Activated CD8-positive, alpha-beta memory T cell treated with anti-CD3 and anti-CD28 coated beads, Interleukin-2, amount 10 ng/mL, durations not matched to agents 7 days and 5 days (primary cell): ENCODE measurements at regions of chr12 and their contacts with region 1.

Region 1: GRCh38 chr12:107884769-107885694 is 110.5 kb downstream of the ASCL4 start:
- DNase-seq: peak; percentile 62
- ATAC-seq: peak; percentile 80
- H3K4me3 Mint-ChIP-seq: no peak overlapping the region
- H3K27ac Mint-ChIP-seq: no peak overlapping the region
- H3K4me1 Mint-ChIP-seq: peaks cover 5% of the 10 kb centered on the region
- H3K27me3 Mint-ChIP-seq: peaks cover 34% of the 10 kb centered on the region

Region 2: DNA sequence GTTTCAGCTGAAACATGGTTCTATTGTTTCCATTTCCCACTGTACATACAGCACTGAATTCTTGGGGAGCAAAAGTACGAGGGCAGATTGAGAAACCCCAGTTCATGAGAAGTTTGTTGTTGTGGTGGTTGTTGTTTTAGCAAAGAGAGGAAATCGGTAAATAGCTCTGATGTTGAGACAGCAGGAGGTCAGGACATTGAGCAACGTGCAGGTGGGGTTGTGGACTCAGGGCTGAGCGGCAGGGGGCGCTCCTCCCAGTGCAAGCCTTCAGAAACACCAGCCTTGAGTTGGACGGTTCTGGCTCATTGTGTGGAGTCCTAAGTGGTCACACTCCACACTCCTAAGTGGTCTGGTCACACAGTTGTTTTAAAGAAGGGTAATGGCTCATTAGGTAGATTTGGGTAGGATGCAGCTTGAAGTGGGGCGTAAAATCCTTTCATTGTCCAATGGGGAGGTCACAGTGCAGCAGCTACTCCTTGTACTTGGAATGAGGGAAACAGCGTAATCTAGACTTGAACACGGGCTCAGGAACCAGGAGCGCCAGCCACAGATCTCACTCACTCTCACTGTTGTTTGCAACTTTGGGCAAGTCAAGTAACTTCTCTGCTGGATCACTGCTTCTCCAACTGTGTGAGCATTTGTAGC is 213.9 kb before region 1 on chr12:
- CTCF ChIA-PET with region 1: interaction called, 32 read pairs
- DNase-seq: peak; percentile 62
- ATAC-seq: peak; percentile 73
- H3K4me3 Mint-ChIP-seq: no peak overlapping the region
- H3K27ac Mint-ChIP-seq: no peak overlapping the region
- H3K4me1 Mint-ChIP-seq: peaks cover 5% of the 10 kb centered on the region
- H3K27me3 Mint-ChIP-seq: peaks cover 34% of the 10 kb centered on the region

Region 3: DNA sequence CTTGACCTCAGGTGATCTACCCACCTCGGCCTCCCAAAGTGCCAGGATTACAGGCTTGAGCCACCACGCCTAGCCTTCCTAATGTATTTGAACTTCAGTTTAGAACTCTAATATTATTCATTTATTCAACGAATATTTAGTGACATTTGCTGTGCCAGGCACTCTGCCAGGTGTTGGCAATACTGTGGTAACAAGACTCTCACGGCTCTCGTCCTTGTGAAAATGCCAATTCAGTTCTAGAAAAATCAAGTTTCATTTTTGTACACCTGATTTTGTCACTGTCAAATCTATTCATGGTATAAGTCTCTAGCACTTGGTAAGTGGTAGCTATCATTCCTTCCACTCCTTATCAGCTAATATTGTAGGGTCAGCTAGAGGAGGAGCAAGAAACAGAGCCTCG is 205.7 kb before region 1 on chr12:
- CTCF ChIA-PET with region 1: interaction called, 32 read pairs
- DNase-seq: no peak
- ATAC-seq: no peak
- H3K4me3 Mint-ChIP-seq: no peak overlapping the region
- H3K27ac Mint-ChIP-seq: no peak overlapping the region
- H3K4me1 Mint-ChIP-seq: peaks cover 1% of the 10 kb centered on the region
- H3K27me3 Mint-ChIP-seq: peaks cover 20% of the 10 kb centered on the region

Region 4: DNA sequence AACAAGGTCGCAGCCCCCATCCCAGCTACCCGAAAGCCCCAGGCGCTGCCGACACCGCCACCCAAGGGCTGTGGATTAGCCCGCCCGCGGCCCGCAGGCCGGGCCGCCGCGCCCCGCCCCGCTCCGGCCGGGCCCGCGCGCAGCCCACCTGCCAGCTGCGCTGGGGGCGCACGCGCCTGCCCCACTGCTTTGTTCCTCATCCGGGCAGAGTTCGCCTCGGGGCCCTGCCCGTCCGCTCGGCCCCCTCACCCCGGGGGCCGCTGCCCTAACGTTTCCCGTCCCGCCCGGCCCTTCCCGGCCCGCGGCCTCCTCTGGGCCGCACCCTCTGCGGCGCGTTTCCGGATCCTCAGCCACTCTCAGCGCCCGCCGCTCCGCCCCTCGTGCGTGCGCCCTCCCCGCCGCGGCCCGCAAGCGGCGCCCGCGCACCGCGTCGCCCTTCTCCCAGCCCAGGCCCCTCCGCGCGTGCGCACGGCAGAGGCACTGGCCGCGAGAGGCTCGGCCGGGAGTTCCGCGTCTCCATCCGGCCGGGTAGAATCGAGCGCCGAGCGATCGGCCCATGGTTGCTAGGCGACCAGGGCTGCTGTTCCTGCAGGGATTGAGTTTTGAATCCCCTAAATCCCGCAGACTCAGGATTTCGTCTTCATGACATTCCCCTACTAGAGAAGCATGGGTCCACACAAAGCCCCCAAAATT is 124.1 kb before region 1 on chr12 and contains the start of gene PRDM4:
- CTCF ChIA-PET with region 1: interaction called, 10 read pairs
- DNase-seq: peak; percentile 93
- ATAC-seq: peak; percentile 93
- H3K4me3 Mint-ChIP-seq: peak within 1 kb of the TSS; percentile 94
- H3K27ac Mint-ChIP-seq: peak within 1 kb of the TSS; percentile 87
- H3K4me1 Mint-ChIP-seq: peaks cover 26% of the 10 kb centered on the region
- H3K27me3 Mint-ChIP-seq: no peaks in the 10 kb centered on the region
- total RNA-seq, gene PRDM4: 26.3 to 37.5 TPM